Common myeloid progenitor, CD34-positive (primary cell): ENCODE measurements at regions of chr2 and their contacts with region 1.

Region 1: DNA sequence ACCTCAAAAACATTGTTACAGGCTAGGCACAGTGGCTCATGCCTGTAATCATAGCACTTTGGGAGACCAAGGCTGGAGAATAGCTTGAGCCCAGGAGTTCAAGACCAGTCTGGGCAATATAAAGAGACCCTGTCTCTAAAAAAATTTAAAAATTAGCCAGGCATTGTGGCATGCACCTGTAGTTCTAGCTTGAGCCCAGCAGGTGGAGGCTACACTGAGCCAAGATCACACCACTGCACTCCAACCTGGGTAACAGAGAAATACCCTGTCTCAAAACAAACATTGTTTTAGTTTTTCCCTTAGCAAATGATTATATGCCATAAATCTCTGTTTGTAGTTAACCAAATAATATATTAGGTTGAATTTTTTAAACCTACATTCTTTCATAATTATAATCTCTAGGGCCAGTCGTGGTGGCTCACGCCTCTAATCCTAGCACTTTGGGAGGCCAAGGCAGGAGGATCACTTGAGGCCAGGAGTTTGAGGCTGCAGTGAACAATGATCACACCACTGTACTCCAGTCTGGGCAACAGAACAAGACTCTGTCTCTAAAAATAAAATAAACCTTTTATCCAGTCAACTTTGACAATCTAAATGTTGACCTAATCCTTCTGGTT is 13.3 kb upstream of the CYP20A1 start:
- DNase-seq: peak in 2 of 3 donors; percentile 47 to 55
- H3K4me3 ChIP-seq: no peak overlapping the region
- H3K27ac ChIP-seq: no peak overlapping the region
- H3K4me1 ChIP-seq: no peaks in the 10 kb centered on the region
- H3K27me3 ChIP-seq: no peaks in the 10 kb centered on the region

Region 2: GRCh38 chr2:202965810-202966460 is 259.6 kb before region 1 on chr2:
- CTCF ChIA-PET with region 1: no interaction called
- POLR2A ChIA-PET with region 1: no interaction called
- DNase-seq: peak; percentile 81 to 95 (median 92)
- H3K4me3 ChIP-seq: no peak overlapping the region
- H3K27ac ChIP-seq: peak overlapping the region in 1 of 2 experiments; percentile 44
- H3K4me1 ChIP-seq: peaks cover 0 to 6% (median 0%) of the 10 kb centered on the region in 4 experiments
- H3K27me3 ChIP-seq: no peaks in the 10 kb centered on the region

Region 3: GRCh38 chr2:203238704-203239526 is 13.4 kb after region 1 on chr2 and contains the start of gene CYP20A1:
- CTCF ChIA-PET with region 1: interaction called, 19 read pairs
- POLR2A ChIA-PET with region 1: no interaction called
- DNase-seq: peak; percentile 98 to 99 (median 99)
- H3K4me3 ChIP-seq: peak within 1 kb of the TSS; percentile 77 to 96 (median 93)
- H3K27ac ChIP-seq: peak within 1 kb of the TSS; percentile 85 to 93
- H3K4me1 ChIP-seq: peaks cover 6 to 16% (median 11%) of the 10 kb centered on the region in 4 experiments
- H3K27me3 ChIP-seq: no peaks in the 10 kb centered on the region

Region 4: DNA sequence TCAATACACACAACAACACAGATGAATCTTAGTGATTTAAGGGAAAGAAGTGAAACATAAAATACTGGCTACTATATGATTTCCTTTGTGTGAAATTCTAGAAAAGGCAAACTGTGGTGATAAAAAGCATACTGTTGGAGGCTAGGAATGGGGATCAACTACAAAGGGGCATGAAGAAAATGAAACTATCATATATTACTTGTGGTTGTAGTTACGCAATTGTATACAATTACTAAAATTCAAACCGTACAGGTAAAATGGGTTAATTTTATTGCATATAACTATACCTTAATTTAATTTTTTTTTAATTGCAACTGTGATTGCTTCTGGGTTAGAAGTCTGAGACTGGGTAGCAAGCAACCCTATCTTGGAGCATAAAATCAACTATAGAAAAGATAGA is 61.0 kb after region 1 on chr2:
- CTCF ChIA-PET with region 1: no interaction called
- POLR2A ChIA-PET with region 1: no interaction called
- DNase-seq: no peak
- H3K4me3 ChIP-seq: no peak overlapping the region
- H3K27ac ChIP-seq: no peak overlapping the region
- H3K4me1 ChIP-seq: no peaks in the 10 kb centered on the region
- H3K27me3 ChIP-seq: no peaks in the 10 kb centered on the region

Region 5: DNA sequence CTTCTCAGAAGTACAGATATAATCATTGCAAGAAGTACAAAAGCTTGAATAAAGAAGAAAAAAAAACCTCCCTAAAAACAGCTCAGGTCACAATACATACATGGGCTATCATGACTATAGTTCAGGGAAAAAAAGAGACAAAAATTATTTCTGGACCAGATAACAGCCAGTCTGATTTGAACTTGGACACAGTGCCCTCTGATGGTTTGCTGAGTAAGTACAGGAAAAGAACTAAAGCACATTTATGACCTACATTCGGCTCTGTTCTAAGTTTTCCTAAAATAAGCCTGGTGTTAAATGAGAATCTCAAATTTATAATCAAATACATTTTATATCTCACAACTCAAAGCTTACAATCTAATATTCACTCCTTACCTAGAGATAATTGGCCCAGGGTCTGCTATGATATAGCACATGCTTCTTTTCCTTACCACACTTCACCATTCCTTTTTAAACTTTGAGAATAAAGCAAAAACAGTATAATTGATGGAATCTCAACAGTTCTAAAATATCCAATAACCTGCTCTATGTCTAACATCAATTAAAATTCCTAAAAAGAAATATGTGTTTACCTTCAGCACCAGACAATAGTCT is 228.4 kb after region 1 on chr2:
- CTCF ChIA-PET with region 1: interaction called, 10 read pairs
- POLR2A ChIA-PET with region 1: no interaction called
- DNase-seq: peak; percentile 56 to 74 (median 73)
- H3K4me3 ChIP-seq: no peak overlapping the region
- H3K27ac ChIP-seq: no peak overlapping the region
- H3K4me1 ChIP-seq: no peaks in the 10 kb centered on the region
- H3K27me3 ChIP-seq: no peaks in the 10 kb centered on the region